Calu3 (cell line): ENCODE measurements at regions of chr4 and their contacts with region 1.

Region 1: DNA sequence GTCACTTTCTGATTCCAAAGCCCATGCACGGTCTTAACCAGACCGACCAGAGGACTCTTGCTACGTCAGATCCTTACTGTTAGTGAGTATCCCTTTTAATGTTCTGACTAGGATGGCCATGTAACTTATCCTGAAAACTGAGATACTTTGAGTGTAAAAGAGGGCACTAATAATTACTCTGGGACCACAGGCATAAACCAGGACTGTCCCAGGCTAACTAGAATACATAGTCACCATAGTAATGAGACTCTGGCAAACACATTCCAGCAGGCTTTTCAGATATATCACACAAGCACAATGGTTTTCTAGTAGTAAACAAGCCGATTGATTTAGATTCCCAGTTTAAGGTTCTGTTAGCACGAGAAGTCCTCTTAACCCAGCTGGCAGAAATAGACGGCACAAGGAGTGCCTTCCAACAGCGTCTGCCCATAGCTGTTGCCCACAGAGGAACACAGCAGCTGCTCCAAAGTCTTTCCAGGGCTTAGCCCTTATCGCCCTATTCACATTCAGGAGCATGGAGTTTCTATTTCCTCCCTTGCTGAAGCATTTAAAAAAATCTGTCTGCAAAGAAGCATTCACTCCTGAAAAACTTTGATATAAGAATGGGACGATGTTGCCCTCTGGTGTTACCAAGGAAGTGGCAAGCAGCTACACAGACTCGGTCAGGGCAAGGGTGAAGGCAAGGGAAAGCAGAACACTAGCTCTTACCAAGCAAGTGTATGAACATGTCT is 92.4 kb downstream of the CXCL13 start:
- DNase-seq: peak; percentile 57
- H3K4me3 Mint-ChIP-seq: peak overlapping the region; percentile 26
- H3K27ac Mint-ChIP-seq: no peak overlapping the region
- H3K4me1 Mint-ChIP-seq: peaks cover 32% of the 10 kb centered on the region
- H3K27me3 Mint-ChIP-seq: no peaks in the 10 kb centered on the region
- CTCF ChIP-seq: peak; percentile 10

Region 2: DNA sequence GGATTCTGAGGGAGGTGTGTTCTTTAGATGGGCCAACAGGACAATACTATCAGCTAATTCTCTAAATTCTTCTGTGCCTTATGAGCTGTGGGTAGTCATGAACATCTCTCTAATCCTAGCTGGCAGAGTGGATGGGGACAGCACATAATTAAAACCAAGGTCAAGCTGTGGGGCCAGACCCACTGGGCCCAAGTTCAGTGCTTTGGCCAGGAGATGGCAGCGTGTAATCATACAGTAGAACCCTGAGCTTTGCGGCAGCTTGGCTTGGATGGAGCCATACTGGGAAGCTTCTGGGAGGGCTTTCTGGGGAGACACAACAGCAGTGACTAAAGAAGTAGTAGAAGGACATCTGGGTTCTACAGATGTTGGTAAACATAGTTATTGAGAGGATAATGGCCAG is 232.8 kb before region 1 on chr4:
- CTCF ChIA-PET with region 1: interaction called, 8 read pairs
- intact Hi-C with region 1: loop called (anchors 5 kb)
- DNase-seq: peak; percentile 38
- H3K4me3 Mint-ChIP-seq: no peak overlapping the region
- H3K27ac Mint-ChIP-seq: no peak overlapping the region
- H3K4me1 Mint-ChIP-seq: no peaks in the 10 kb centered on the region
- H3K27me3 Mint-ChIP-seq: peaks cover 29% of the 10 kb centered on the region
- CTCF ChIP-seq: no peak

Region 3: DNA sequence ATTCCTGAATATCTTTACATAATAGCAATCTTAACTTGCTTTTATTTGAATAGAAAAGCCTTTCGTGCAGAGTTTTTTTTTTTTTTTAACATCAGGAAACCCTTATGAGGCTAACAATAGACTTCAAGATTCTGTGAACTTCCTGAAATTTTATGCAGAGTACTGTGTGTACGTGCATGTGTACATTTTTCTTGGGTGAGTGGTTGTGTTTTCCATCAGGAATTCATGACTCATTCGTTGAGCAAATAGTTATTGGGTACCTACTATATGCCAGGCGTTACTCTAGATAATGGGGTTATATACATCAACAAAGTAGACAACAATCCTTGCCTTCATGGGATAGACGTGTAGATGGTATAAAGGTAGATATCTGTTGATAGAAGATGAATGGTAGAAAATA is 223.7 kb after region 1 on chr4:
- CTCF ChIA-PET with region 1: no interaction called
- intact Hi-C with region 1: no loop called
- DNase-seq: peak; percentile 8
- H3K4me3 Mint-ChIP-seq: no peak overlapping the region
- H3K27ac Mint-ChIP-seq: peak overlapping the region; percentile 37
- H3K4me1 Mint-ChIP-seq: peaks cover 28% of the 10 kb centered on the region
- H3K27me3 Mint-ChIP-seq: no peaks in the 10 kb centered on the region
- CTCF ChIP-seq: no peak